B cell (primary cell): ENCODE measurements at regions of chr13 and their contacts with region 1.

Region 1: DNA sequence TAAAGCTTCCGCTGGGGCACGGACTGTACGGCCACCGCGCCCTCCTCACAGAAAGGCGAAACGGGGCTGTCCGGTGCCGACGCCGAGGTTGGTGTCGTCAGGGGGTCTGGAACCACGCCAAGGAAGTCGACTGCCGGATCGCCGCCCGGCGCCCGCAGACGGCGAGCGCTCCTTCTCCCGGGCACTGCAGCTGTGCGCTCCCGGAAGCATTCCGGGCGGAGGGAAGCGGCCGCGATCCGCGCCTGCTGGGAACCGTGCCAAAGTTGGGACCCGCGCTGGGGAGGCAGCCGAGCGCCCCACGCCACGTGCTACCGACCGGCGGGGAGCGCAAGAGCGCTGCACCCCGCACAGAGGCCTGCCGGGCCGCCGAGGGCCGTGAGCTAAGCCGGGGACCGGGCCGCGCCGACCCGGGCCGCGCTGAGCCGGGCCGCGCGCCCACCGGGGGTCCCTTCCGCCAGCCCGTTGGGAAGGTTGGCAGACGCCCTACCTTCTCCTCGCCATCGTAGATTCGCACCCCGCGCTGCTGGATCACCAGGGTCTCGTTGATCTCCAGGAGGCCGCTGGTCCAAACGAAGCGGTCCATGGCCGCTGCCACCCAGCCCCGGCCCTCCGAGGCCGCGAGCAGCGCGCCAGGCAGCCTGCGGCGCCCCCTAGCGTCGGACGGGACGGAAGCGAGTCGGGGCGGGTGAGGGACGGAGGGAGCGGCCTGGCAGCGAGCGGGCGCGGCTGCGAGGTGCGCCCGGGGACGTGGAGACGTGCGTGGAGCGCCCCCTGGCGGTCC is at the start of gene VPS36:
- DNase-seq: peak; percentile 97
- ATAC-seq: peak; percentile 65
- H3K4me3 ChIP-seq: peak within 1 kb of the TSS; percentile 74 to 95 (median 82)
- H3K4me3 Mint-ChIP-seq: peak within 1 kb of the TSS; percentile 92
- H3K27ac ChIP-seq: peak within 1 kb of the TSS; percentile 76 to 80
- H3K27ac Mint-ChIP-seq: peak within 1 kb of the TSS; percentile 96
- H3K4me1 ChIP-seq: peaks cover 24 to 32% of the 10 kb centered on the region in 2 donors
- H3K4me1 Mint-ChIP-seq: peaks cover 39% of the 10 kb centered on the region
- H3K27me3 ChIP-seq: no peaks in the 10 kb centered on the region
- H3K27me3 Mint-ChIP-seq: no peaks in the 10 kb centered on the region
- CTCF ChIP-seq: peak; percentile 100
- total RNA-seq, gene VPS36: 71.5 TPM in 2 replicates

Region 2: DNA sequence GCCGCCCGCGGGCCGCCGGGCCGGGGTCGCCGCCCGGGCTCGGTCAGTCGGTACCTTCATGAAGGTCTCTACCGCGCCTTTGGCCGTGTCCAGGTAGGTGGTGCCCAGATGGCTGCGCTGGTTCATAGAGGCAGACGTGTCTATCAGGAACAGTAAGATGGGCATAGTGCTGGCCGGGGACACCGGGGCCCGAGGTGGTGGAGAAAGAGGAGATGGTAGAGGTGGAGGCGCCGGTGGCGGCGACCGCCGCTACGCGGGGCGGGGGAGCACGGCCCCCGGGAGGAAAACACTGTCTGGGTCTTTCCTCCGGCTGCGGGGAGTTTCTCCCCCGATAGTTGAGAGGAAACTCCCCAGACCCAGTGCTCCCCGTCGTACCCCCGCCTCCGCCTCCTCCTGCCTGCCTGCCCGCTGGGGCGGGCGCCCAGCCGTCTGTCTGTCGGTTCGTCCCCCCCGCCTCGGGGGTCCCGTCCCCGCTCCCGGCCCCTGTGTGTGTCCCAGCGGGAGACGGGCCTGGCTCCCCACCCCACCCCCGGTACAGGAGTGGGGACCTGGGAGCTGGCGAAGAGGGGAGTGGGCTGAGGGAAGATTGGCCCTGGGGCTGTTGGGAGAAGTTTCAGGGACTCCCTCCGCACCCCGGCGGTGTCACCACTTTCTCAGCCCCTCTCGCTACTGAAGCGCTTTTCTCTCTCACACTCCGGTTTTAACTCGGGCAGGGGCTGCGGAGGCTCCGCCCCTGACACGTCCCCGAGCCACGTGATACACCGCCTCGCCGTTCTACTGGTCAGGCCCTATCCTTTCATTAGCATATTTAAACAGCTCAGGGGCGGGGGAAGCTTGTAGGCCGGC is 997.6 kb before region 1 on chr13 and contains the start of gene INTS6:
- CTCF ChIA-PET with region 1: no interaction called
- POLR2A ChIA-PET with region 1: no interaction called
- intact Hi-C with region 1: loop called (anchors 1 kb)
- DNase-seq: peak; percentile 100
- ATAC-seq: peak; percentile 73
- H3K4me3 ChIP-seq: peak within 1 kb of the TSS; percentile 81 to 93 (median 87)
- H3K4me3 Mint-ChIP-seq: peak within 1 kb of the TSS; percentile 95
- H3K27ac ChIP-seq: peak within 1 kb of the TSS; percentile 95 to 98
- H3K27ac Mint-ChIP-seq: peak within 1 kb of the TSS; percentile 97
- H3K4me1 ChIP-seq: peaks cover 25 to 28% of the 10 kb centered on the region in 2 donors
- H3K4me1 Mint-ChIP-seq: peaks cover 48% of the 10 kb centered on the region
- H3K27me3 ChIP-seq: no peaks in the 10 kb centered on the region
- H3K27me3 Mint-ChIP-seq: no peaks in the 10 kb centered on the region
- CTCF ChIP-seq: no peak
- total RNA-seq, gene INTS6: 74.7 TPM in 2 replicates

Region 3: DNA sequence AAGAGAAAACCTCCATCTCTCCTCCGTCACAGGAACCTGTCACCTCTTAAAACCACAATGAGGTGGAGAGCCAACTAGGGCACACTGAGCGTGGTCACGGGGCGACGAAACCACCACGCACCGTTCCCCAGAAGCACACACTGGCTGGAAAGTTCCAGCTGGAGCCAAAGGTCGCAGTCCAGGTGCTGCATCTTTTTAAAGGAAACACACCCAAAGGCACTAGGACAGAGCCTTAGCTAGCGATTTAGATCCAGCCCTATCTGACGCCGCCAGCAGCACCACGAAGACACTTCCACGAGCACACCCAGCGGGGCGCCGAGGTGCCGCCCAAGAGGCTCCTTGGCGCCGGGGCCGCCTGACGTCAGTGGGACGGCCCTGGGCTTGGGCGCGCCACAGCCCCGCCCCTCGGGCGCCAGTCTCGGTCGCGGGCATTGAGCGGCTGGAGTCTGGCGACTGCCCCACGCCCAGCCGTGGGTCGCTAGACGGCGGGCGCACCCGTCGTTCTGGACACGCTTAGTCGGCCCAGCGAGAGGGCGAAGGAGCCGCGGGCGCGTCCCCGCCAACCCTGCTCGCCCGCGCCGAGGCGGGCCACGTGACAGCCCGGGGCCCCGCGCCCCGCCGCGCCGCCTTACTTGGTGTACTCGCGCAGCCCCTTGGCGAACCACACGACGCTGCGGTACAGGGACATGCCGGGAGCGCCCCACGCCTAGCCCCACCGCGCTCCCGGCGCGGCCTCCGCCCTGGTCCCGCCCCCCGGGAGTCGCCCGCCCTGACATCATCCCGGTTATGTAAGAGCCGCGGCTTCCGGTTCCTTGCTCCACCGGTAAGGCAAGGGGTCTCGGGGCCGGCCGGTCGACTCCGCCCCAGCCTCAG is 646.5 kb before region 1 on chr13 and contains the start of gene DHRS12:
- CTCF ChIA-PET with region 1: no interaction called
- POLR2A ChIA-PET with region 1: no interaction called
- intact Hi-C with region 1: loop called (anchors 2 kb)
- DNase-seq: peak; percentile 95
- ATAC-seq: peak; percentile 84
- H3K4me3 ChIP-seq: peak within 1 kb of the TSS; percentile 64 to 94 (median 72)
- H3K4me3 Mint-ChIP-seq: peak within 1 kb of the TSS; percentile 99
- H3K27ac ChIP-seq: peak within 1 kb of the TSS; percentile 98
- H3K27ac Mint-ChIP-seq: peak within 1 kb of the TSS; percentile 100
- H3K4me1 ChIP-seq: peaks cover 19 to 27% of the 10 kb centered on the region in 2 donors
- H3K4me1 Mint-ChIP-seq: peaks cover 38% of the 10 kb centered on the region
- H3K27me3 ChIP-seq: no peaks in the 10 kb centered on the region
- H3K27me3 Mint-ChIP-seq: no peaks in the 10 kb centered on the region
- CTCF ChIP-seq: no peak
- total RNA-seq, gene DHRS12: 23.2 TPM in 2 replicates

Region 4: DNA sequence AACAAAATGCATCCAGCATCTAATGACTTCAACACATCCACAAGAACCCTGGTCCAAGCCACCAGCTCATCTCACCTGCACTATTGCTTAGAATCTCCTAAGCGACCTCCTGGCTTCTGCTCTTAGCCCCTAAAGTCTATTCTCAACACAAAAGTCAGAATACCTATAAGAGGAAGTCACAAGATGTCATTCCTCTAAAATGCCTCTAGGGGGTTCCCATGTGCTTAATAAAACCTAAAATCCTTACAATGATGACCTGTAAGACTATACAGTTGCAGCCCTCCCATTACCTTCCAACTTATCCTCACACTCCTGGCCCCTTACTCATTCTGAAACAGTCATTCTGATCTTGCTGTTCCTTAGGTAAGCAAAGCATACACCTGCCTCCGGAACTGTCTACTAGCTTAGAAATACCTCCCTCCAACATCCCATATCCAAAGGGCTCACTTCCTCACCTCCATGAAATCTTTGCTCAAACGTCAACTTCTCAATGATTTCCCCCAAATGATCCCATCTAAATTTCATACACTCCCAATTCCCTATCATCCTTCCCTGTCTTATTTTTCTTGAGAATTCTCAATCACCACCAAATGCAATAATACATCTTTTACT is 449.0 kb before region 1 on chr13:
- CTCF ChIA-PET with region 1: interaction called, 4 read pairs
- POLR2A ChIA-PET with region 1: no interaction called
- intact Hi-C with region 1: loop called (anchors 1 kb)
- DNase-seq: peak; percentile 55
- ATAC-seq: peak; percentile 85
- H3K4me3 ChIP-seq: no peak overlapping the region
- H3K4me3 Mint-ChIP-seq: no peak overlapping the region
- H3K27ac ChIP-seq: no peak overlapping the region
- H3K27ac Mint-ChIP-seq: no peak overlapping the region
- H3K4me1 ChIP-seq: no peaks in the 10 kb centered on the region
- H3K4me1 Mint-ChIP-seq: no peaks in the 10 kb centered on the region
- H3K27me3 ChIP-seq: peaks cover 0 to 16% (median 2%) of the 10 kb centered on the region in 4 experiments
- H3K27me3 Mint-ChIP-seq: peaks cover 34% of the 10 kb centered on the region
- CTCF ChIP-seq: peak; percentile 90

Region 5: GRCh38 chr13:52128714-52129700 is 321.2 kb before region 1 on chr13 and contains the start of gene NEK5:
- CTCF ChIA-PET with region 1: interaction called, 3 read pairs
- POLR2A ChIA-PET with region 1: no interaction called
- intact Hi-C with region 1: loop called (anchors 5 kb)
- DNase-seq: peak; percentile 64
- ATAC-seq: peak; percentile 66
- H3K4me3 ChIP-seq: peak within 1 kb of the TSS; percentile 50 to 67 (median 61)
- H3K4me3 Mint-ChIP-seq: peak within 1 kb of the TSS; percentile 86
- H3K27ac ChIP-seq: no peak within 1 kb of the TSS
- H3K27ac Mint-ChIP-seq: no peak within 1 kb of the TSS
- H3K4me1 ChIP-seq: peaks cover 17 to 18% of the 10 kb centered on the region in 2 donors
- H3K4me1 Mint-ChIP-seq: peaks cover 16% of the 10 kb centered on the region
- H3K27me3 ChIP-seq: peaks cover 0 to 25% (median 16%) of the 10 kb centered on the region in 4 experiments
- H3K27me3 Mint-ChIP-seq: peaks cover 21% of the 10 kb centered on the region
- CTCF ChIP-seq: peak; percentile 67
- total RNA-seq, gene NEK5: not detected in 2 replicates

Region 6: GRCh38 chr13:52348071-52348470 is 102.1 kb before region 1 on chr13:
- CTCF ChIA-PET with region 1: interaction called, 17 read pairs
- POLR2A ChIA-PET with region 1: no interaction called
- intact Hi-C with region 1: loop called (anchors 1 kb)
- DNase-seq: no peak
- ATAC-seq: no peak
- H3K4me3 ChIP-seq: no peak overlapping the region
- H3K4me3 Mint-ChIP-seq: no peak overlapping the region
- H3K27ac ChIP-seq: no peak overlapping the region
- H3K27ac Mint-ChIP-seq: no peak overlapping the region
- H3K4me1 ChIP-seq: no peaks in the 10 kb centered on the region
- H3K4me1 Mint-ChIP-seq: no peaks in the 10 kb centered on the region
- H3K27me3 ChIP-seq: peaks cover 0 to 2% (median 0%) of the 10 kb centered on the region in 4 experiments
- H3K27me3 Mint-ChIP-seq: peaks cover 13% of the 10 kb centered on the region
- CTCF ChIP-seq: no peak

Region 7: DNA sequence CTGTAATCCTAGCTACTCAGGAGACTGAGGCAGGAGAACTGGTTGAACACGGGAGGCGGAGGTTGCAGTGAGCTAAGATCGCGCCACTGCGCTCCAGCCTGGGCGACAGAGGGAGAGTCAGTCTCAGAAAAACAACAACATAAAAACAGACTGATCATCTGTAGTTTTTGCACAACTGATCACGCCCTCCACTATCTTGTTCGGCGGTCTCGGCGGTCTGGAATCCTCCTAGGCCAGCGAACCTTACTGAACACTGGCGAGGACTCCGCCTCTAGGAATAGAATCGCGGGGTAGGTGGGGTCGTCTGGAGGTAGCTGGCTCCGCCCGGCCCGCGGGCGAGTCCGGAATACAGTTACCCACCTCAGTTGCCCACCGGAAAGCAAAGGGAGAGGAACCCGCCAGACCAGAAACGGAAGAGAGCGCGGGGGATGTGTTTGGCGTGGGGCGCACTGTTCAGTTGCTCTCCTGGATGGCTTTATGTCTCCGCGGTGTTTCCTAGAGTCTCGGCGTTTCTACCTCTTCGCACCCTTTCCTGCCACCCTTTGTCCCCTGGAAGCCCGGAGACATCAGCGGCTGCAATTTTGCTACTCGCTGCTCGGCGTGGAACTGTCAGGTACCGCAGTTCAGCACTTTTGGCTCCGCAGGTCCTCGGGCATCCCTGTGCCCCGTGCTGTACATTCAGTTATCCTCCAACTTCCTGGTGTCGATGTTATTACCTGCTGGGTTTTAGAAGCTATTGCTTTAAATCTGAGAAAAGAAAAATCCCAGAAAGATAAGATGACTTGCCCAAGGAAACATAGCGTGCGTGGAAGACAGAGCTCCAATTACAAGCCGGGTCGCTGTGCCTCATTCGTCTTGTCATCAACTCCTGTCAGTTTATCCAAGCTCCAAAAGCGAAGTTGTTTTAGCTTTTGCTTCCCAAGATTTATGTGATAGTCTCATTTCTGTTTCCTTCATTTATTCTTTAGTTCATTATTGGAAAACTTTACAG is 167.2 kb after region 1 on chr13:
- CTCF ChIA-PET with region 1: interaction called, 17 read pairs
- POLR2A ChIA-PET with region 1: interaction called, 6 read pairs
- intact Hi-C with region 1: loop called (anchors 1 kb)
- DNase-seq: peak; percentile 88
- ATAC-seq: peak; percentile 95
- H3K4me3 ChIP-seq: peak overlapping the region; percentile 65 to 96 (median 93)
- H3K4me3 Mint-ChIP-seq: peak overlapping the region; percentile 98
- H3K27ac ChIP-seq: peak overlapping the region; percentile 54 to 77
- H3K27ac Mint-ChIP-seq: peak overlapping the region; percentile 97
- H3K4me1 ChIP-seq: peaks cover 12 to 16% of the 10 kb centered on the region in 2 donors
- H3K4me1 Mint-ChIP-seq: peaks cover 41% of the 10 kb centered on the region
- H3K27me3 ChIP-seq: no peaks in the 10 kb centered on the region
- H3K27me3 Mint-ChIP-seq: peaks cover under 1% of the 10 kb centered on the region
- CTCF ChIP-seq: no peak

Region 8: DNA sequence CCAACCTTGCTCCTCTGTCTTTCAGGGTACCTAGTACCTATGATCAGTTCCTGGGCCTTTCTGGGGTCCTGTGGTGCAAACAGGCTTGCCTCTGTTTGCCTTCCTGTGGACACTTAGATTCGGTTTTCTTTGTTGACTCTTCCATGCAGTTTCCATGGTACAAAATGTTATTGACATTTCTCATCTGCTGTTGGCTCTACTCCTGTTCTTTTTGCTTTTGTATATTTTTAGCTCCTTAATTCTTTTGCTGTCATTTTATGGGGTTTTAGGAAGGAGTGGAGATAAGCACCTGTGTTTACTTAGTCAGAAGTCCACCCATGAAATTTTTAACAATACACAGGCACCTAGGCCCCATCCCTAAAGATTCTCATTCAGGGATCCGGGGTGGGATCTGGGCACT is 309.9 kb after region 1 on chr13:
- CTCF ChIA-PET with region 1: no interaction called
- POLR2A ChIA-PET with region 1: no interaction called
- intact Hi-C with region 1: no loop called
- DNase-seq: no peak
- ATAC-seq: no peak
- H3K4me3 ChIP-seq: no peak overlapping the region
- H3K4me3 Mint-ChIP-seq: no peak overlapping the region
- H3K27ac ChIP-seq: no peak overlapping the region
- H3K27ac Mint-ChIP-seq: no peak overlapping the region
- H3K4me1 ChIP-seq: no peaks in the 10 kb centered on the region
- H3K4me1 Mint-ChIP-seq: no peaks in the 10 kb centered on the region
- H3K27me3 ChIP-seq: peaks cover 0 to 2% (median 0%) of the 10 kb centered on the region in 4 experiments
- H3K27me3 Mint-ChIP-seq: peaks cover 18% of the 10 kb centered on the region
- CTCF ChIP-seq: no peak